Heart right ventricle (tissue), 16 donors: ENCODE measurements at regions of chr2 and their contacts with region 1.

Region 1: DNA sequence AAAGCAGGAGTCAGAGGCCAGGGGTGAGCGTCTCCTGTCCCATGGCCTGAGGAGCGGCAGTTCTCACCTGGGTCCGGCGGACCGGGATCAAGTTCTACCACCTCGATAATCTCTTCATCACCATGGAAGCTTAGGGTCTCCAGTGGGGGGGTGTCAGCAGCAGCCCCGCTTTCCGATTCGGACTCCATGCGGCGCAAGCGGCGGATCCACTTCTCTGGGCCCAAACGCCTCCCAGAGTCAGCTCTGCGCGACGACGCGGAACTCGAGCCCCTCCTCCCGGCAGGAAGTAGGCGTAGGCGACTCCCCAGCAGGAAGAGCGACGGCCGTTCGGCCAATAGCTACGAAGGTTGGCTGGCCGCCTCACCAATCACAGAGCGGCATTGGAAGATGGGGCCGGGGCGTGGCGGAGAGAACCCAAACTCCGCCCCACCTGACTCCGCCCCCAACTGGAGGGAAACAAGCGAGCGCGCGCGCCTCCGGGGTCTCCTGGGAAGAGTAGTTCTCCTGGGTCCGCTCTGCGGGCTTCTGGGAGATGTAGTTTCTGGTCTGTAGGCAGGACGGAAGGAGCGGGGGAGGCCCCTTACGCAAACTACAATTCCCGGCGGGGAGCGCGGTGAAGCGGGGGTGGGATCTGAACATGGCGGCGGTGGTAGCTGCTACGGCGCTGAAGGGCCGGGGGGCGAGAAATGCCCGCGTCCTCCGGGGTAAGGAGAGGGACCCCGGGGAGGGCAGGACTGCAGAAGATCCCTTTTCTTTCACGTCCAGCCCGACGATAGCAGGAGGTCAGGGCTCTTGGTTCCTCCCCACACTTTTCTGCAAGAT is at the starts of genes AAMP and PNKD:
- DNase-seq: peak; percentile 100
- ATAC-seq: peak; percentile 92 to 96 (median 95)
- H3K4me3 ChIP-seq: peak within 1 kb of the TSS; percentile 72 to 97 (median 90)
- H3K27ac ChIP-seq: peak within 1 kb of the TSS; percentile 62 to 93 (median 88)
- H3K4me1 ChIP-seq: peaks cover 17 to 64% (median 47%) of the 10 kb centered on the region in 9 donors
- H3K27me3 ChIP-seq: no peaks in the 10 kb centered on the region
- CTCF ChIP-seq: peak in 7 of 9 donors; percentile 4 to 54 (median 44)
- total RNA-seq, gene AAMP: 45.9 to 65.1 (median 57.5) TPM
- total RNA-seq, gene PNKD: 56.9 to 91.1 (median 74.2) TPM

Region 2: GRCh38 chr2:218194880-218195279 is 75.2 kb before region 1 on chr2:
- intact Hi-C with region 1: no loop called
- DNase-seq: no peak
- ATAC-seq: no peak
- H3K4me3 ChIP-seq: no peak overlapping the region
- H3K27ac ChIP-seq: no peak overlapping the region
- H3K4me1 ChIP-seq: peaks cover 0 to 13% (median 0%) of the 10 kb centered on the region in 9 donors
- H3K27me3 ChIP-seq: no peaks in the 10 kb centered on the region
- CTCF ChIP-seq: no peak

Region 3: DNA sequence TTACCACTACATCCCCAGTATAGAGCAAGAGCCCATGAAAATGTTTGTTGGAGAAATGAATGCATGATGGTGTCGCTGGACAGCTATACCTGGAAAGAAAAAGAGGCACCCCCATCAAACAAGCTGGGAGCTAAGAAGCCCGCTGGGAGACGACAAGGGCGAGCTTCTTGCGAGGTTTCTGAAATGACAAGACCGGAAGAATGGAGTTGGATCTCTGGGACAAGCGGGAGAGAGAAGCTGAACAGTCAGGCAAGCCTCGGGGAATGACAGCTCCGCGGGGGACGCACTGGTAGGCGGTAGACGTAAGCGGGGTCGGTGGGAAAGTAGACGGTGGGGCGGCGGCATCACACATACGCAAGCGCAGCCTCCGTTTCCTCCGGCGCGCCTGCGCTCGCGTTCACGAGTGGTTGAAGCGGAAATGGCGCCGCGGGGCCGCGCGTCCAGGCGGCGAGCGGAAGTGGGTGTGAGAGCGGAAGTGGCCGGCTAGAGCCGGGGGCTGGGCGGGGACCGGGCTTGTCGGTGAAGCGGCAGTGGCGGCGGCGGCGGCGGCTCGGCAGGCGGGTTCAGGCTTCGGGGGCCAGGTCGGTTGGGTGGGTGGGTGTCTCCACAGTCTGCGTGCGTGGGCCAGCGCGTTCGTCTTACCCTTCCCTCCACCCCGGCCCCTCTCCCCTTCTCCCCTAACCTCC is 53.3 kb before region 1 on chr2 and contains the start of gene ARPC2:
- intact Hi-C with region 1: loop called in 3 of 10 experiments (anchors 2 to 5 kb)
- DNase-seq: peak; percentile 95 to 96
- ATAC-seq: peak; percentile 97 to 99 (median 98)
- H3K4me3 ChIP-seq: peak within 1 kb of the TSS; percentile 78 to 97 (median 94)
- H3K27ac ChIP-seq: peak within 1 kb of the TSS; percentile 58 to 99 (median 94)
- H3K4me1 ChIP-seq: peaks cover 11 to 53% (median 44%) of the 10 kb centered on the region in 9 donors
- H3K27me3 ChIP-seq: no peaks in the 10 kb centered on the region
- CTCF ChIP-seq: peak in 2 of 9 donors; percentile 5 to 20
- total RNA-seq, gene ARPC2: 120 to 213 (median 134) TPM

Region 4: GRCh38 chr2:218292048-218293014 is 22.2 kb after region 1 on chr2 and contains the start of gene TMBIM1:
- intact Hi-C with region 1: loop called in 3 of 10 experiments (anchors 1 to 2 kb)
- DNase-seq: peak; percentile 74 to 85
- ATAC-seq: peak; percentile 83 to 96 (median 88)
- H3K4me3 ChIP-seq: peak within 1 kb of the TSS; percentile 71 to 99 (median 92)
- H3K27ac ChIP-seq: peak within 1 kb of the TSS; percentile 95 to 100 (median 98)
- H3K4me1 ChIP-seq: peaks cover 16 to 72% (median 48%) of the 10 kb centered on the region in 9 donors
- H3K27me3 ChIP-seq: no peaks in the 10 kb centered on the region
- CTCF ChIP-seq: peak; percentile 76 to 99 (median 96)
- total RNA-seq, gene TMBIM1: 85.3 to 151 (median 110) TPM

Region 5: DNA sequence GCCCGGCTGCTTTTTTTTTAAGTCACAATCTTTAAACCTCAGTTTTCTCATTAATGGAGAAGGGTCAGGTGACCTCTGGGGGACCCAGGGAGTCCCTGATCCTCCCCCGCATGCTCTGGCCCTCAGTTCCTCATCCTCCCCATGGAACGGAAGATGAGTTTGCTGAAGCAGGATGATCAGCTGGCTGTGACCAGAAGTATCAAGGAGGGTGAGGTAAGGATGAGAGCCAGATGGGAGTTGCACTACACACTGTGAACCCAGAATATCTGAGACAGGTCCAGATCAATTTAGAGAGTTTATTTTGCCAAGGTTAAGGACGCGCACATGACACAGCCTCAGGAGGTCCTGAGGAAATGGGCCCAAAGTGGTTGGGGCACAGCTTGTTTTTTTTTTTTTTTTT is 90.3 kb after region 1 on chr2:
- intact Hi-C with region 1: no loop called
- DNase-seq: no peak
- ATAC-seq: peak in 6 of 8 donors; percentile 27 to 66 (median 43)
- H3K4me3 ChIP-seq: no peak overlapping the region
- H3K27ac ChIP-seq: peak overlapping the region in 1 of 10 donors; percentile 86
- H3K4me1 ChIP-seq: peaks cover 0 to 51% (median 0%) of the 10 kb centered on the region in 9 donors
- H3K27me3 ChIP-seq: no peaks in the 10 kb centered on the region
- CTCF ChIP-seq: no peak

Region 6: GRCh38 chr2:218466016-218466521 is 196.0 kb after region 1 on chr2:
- intact Hi-C with region 1: loop called in 1 of 10 experiments (anchors 10 kb)
- DNase-seq: no peak
- ATAC-seq: peak in 3 of 8 donors; percentile 37 to 53 (median 44)
- H3K4me3 ChIP-seq: no peak overlapping the region
- H3K27ac ChIP-seq: no peak overlapping the region
- H3K4me1 ChIP-seq: peaks cover 0 to 8% (median 0%) of the 10 kb centered on the region in 9 donors
- H3K27me3 ChIP-seq: no peaks in the 10 kb centered on the region
- CTCF ChIP-seq: peak in 8 of 9 donors; percentile 30 to 68 (median 60)